ENCODE measurements at regions of chr3 and their contacts with region 1.

Region 1: DNA sequence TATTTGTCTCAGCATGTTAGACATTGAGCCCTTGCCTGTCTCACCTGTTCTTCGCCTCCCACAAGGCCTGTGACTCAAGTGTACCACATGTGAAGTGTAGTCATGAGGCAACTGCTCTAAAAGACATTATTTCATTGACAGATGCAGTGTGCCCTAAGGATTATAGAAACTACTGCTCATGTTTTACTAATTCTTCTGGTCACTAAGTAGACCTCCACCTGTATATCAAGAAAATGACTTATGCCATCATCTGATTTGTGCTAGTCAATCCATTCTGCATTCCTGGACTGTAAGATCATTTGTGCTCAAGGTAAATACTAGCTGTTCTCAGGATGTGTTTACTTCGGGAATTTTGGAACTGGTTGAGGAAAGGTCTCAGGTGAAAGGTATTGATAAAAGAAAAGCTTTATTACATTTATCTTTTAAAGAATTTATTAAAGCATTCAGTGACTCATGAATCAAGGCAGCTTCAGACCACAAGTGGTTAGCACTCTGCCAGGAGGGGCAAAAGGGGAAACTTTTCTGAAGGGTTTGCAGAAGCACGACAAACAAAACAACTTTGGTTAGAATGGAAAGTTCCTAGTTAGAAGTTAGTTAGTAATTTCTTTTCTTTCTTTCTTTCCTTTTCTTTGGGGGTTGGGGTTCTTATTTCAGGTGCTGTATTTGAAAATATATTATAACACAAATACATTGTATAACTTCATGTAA is 465.3 kb upstream of the CBLB start:
- DNase-seq: peak; percentile 77
- H3K4me3 Mint-ChIP-seq: peak overlapping the region; percentile 75
- H3K27ac Mint-ChIP-seq: peak overlapping the region; percentile 91
- H3K4me1 Mint-ChIP-seq: peaks cover 74% of the 10 kb centered on the region
- H3K27me3 Mint-ChIP-seq: no peaks in the 10 kb centered on the region

Region 2: DNA sequence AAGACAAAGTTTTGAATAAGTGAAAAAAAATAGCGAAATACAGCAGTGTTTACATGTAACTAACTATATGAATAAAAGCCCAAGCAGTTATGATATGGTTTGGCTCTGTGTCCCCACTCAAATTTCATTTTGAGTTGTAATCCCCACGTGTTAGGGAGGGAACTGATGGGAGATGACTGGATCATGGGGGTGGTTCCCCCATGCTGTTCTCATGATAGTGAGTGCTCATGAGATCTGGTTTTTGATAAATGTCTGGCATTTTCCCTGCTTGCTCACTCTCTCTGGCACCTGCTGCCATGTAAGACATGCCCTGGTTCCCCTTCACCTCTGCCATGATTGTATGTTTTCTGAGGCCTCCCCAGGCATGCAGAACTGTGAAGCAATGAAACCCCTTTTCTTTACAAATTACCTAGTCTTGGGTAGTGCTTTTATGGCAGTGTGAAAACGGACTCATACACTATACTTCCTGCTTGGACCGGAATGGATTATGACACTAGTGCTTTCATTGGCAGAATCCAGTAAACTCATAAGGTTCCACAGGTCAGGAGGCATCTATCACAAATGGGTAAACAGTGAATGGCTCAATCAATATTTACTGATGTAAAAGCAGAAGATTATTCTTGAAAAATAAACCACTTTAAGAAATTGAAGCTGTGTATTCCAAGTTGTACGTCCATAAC is 657.3 kb before region 1 on chr3:
- intact Hi-C with region 1: loop called (anchors 1 kb)
- DNase-seq: peak; percentile 48
- H3K4me3 Mint-ChIP-seq: no peak overlapping the region
- H3K27ac Mint-ChIP-seq: peak overlapping the region; percentile 89
- H3K4me1 Mint-ChIP-seq: peaks cover 26% of the 10 kb centered on the region
- H3K27me3 Mint-ChIP-seq: no peaks in the 10 kb centered on the region

Region 3: GRCh38 chr3:105868742-105869530 is 465.1 kb before region 1 on chr3 and contains the start of gene CBLB:
- intact Hi-C with region 1: loop called (anchors 1 kb)
- DNase-seq: peak; percentile 95
- H3K4me3 Mint-ChIP-seq: peak within 1 kb of the TSS; percentile 93
- H3K27ac Mint-ChIP-seq: peak within 1 kb of the TSS; percentile 98
- H3K4me1 Mint-ChIP-seq: peaks cover 31% of the 10 kb centered on the region
- H3K27me3 Mint-ChIP-seq: no peaks in the 10 kb centered on the region
- total RNA-seq, gene CBLB: 177 and 183 TPM in 2 replicates

Region 4: GRCh38 chr3:106183762-106184391 is 150.2 kb before region 1 on chr3:
- intact Hi-C with region 1: loop called (anchors 1 kb)
- DNase-seq: no peak
- H3K4me3 Mint-ChIP-seq: peak overlapping the region; percentile 9
- H3K27ac Mint-ChIP-seq: peak overlapping the region; percentile 21
- H3K4me1 Mint-ChIP-seq: peaks cover 42% of the 10 kb centered on the region
- H3K27me3 Mint-ChIP-seq: no peaks in the 10 kb centered on the region

Region 5: DNA sequence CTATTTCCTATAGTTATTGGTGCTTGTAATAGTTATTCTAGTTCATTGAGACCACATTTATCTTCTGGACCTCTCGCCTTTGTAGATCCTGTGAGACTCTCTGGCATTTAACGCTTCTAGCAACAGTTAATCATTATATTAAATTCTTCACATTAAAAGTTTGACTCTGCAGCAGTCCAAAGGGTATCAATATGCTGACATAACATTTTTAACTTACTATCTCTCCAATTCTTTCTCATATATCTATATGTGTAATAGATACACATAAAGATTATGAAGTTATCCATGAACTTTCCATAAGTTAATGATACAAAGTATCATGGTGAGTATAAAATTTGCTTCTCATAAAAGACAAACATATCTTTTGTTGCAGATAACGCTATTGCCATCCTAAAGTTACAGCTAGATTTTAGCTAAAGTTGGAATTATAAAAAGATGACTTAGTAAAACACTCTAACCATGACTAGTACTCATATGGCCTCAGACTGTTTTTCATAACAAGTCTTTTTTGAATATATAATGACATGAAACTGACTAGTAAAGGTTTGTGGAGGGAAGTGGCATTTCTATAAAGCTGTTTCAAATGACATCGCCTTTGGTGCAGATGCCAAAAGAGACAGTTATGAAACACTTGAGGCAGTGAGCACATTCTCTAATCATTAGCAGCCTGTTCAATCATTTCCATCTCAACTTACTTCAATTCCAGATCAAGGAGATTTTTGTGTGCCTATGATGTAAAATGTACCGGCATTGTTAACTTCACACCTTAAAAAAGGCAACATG is 86.0 kb before region 1 on chr3:
- intact Hi-C with region 1: loop called (anchors 1 kb)
- DNase-seq: no peak
- H3K4me3 Mint-ChIP-seq: no peak overlapping the region
- H3K27ac Mint-ChIP-seq: peak overlapping the region; percentile 32
- H3K4me1 Mint-ChIP-seq: peaks cover 16% of the 10 kb centered on the region
- H3K27me3 Mint-ChIP-seq: no peaks in the 10 kb centered on the region

Region 6: GRCh38 chr3:106473576-106474475 is 139.8 kb after region 1 on chr3:
- intact Hi-C with region 1: loop called (anchors 1 kb)
- DNase-seq: no peak
- H3K4me3 Mint-ChIP-seq: no peak overlapping the region
- H3K27ac Mint-ChIP-seq: peak overlapping the region; percentile 83
- H3K4me1 Mint-ChIP-seq: peaks cover 8% of the 10 kb centered on the region
- H3K27me3 Mint-ChIP-seq: no peaks in the 10 kb centered on the region